ENCODE measurements at regions of chr1 and their contacts with region 1.

Region 1: DNA sequence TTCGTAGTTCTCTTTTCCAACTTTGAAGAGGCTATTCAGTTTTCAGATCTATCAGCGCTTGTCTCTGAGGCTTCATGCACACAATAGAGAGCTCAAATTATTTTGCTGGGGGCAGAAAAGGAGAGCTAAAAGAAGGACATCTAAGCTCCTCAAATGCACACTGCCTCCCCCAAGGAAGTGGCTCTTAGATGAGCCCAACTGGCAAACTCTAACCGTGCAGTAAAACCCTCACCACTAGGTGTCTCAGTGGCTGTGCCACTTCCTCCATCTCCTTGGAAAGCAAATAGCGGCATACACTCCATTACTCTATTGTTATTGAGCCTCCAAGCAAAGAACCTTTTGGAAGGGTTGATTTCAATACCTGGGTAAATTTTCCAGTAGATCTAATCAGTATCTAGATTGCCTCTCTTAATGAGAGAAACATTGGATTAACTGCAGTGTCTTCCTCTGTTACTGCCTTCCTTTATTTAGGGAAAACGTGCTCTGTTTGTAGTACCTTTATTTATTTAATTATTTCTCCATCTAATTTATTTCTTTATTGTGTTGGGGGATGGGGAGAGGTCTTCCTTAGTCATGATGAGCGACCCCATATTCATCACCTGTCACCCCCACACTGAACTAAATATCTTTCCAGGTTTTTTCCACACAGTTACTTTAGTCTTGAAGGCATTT is 9.2 kb upstream of the SFPQ start:
- DNase-seq: peak; percentile 63
- H3K4me3 Mint-ChIP-seq: no peak overlapping the region
- H3K27ac Mint-ChIP-seq: no peak overlapping the region
- H3K4me1 Mint-ChIP-seq: peaks cover 8% of the 10 kb centered on the region
- H3K27me3 Mint-ChIP-seq: peaks cover 17% of the 10 kb centered on the region

Region 2: GRCh38 chr1:35120458-35121133 is 81.6 kb before region 1 on chr1:
- intact Hi-C with region 1: no loop called
- DNase-seq: no peak
- H3K4me3 Mint-ChIP-seq: peak overlapping the region; percentile 19
- H3K27ac Mint-ChIP-seq: no peak overlapping the region
- H3K4me1 Mint-ChIP-seq: peaks cover 11% of the 10 kb centered on the region
- H3K27me3 Mint-ChIP-seq: peaks cover 4% of the 10 kb centered on the region

Region 3: GRCh38 chr1:35298464-35298863 is 96.3 kb after region 1 on chr1:
- intact Hi-C with region 1: loop called (anchors 1 kb)
- DNase-seq: peak; percentile 5
- H3K4me3 Mint-ChIP-seq: no peak overlapping the region
- H3K27ac Mint-ChIP-seq: no peak overlapping the region
- H3K4me1 Mint-ChIP-seq: peaks cover 12% of the 10 kb centered on the region
- H3K27me3 Mint-ChIP-seq: no peaks in the 10 kb centered on the region

Region 4: DNA sequence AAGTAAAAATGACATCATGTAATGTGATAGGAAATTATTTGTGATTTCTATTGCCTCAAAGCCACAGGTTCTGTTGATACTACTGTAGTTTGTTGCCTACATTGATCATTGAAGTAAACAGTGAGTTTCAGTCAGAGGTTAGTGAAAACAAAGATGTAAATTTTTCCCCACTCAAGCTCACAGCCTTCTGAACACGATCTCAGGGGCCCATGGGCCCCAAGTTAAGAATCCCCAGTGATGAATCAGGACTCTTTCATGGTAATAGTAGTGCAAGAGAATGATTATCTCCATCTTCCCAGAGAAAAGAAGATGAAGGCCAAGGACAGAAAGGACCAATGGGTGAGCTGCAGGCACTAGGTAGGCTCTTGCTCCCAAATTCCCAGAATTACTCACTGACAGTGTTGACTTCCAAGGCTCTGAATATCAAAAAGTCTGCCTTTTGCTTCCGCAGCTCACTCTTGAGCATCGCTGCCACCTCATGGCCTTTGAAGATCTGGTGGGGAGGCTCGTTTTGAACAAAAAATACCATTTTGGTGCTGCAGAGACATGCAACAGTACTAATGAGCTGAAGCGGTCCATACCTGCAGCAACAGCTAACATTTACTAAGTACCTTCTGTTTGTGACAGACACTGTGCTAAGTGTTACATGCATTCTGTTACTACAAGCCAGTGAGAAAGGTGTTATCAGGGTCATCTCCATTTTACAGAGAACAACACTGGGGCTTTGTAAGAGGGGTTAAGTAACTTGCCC is 241.8 kb after region 1 on chr1:
- intact Hi-C with region 1: loop called (anchors 5 kb)
- DNase-seq: no peak
- H3K4me3 Mint-ChIP-seq: no peak overlapping the region
- H3K27ac Mint-ChIP-seq: no peak overlapping the region
- H3K4me1 Mint-ChIP-seq: no peaks in the 10 kb centered on the region
- H3K27me3 Mint-ChIP-seq: no peaks in the 10 kb centered on the region